Ovary (tissue), 10 donors: ENCODE measurements at regions of chr5 and their contacts with region 1.

Region 1: DNA sequence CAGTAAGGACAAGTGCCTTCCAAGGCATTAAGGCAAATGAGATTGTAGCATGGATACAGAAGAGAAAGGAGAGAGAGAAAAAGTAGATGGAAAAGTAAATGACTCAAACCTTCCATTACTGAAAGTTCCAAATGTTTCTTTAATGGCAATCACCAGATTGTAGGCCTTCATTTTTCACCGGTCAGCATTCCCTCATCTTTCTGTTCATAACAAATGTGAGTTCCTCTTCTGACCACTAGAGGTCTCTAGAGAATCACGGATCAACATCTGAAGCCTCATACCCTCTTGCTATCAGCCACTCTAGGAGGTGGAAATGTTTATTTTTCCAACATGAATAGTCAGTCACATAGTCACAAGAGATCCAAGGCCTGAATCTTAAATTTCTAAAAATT is 73.6 kb upstream of the RPS23 start:
- DNase-seq: no peak
- H3K4me3 ChIP-seq: no peak overlapping the region
- H3K27ac ChIP-seq: no peak overlapping the region
- H3K4me1 ChIP-seq: peaks cover 3% of the 10 kb centered on the region
- H3K27me3 ChIP-seq: no peaks in the 10 kb centered on the region
- CTCF ChIP-seq: peak; percentile 33 to 79 (median 75)
- EP300 ChIP-seq: no peak
- POLR2A ChIP-seq: no peak

Region 2: DNA sequence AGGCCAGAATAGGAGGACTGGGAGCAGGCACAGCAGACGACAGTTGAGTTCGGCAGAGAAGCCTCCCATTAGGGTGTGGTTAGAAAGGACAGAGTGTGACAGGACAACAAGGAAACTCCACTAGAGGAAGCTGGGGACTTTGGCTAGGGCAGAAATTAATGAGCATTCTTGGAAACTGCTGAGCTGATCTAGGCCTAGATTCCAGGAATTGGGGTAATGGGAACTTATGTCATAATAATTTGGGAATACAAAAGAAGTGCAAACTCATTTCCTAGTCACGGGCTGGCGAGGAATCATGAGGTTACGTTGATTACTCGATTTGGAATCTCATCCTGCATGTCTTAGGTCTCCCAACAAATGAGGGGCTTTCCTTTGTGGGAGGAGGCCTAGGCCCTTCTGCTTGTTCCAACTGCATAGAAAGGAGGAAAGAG is 71.0 kb after region 1 on chr5:
- intact Hi-C with region 1: no loop called
- DNase-seq: peak in 1 of 5 donors; percentile 27
- H3K4me3 ChIP-seq: no peak overlapping the region
- H3K27ac ChIP-seq: no peak overlapping the region
- H3K4me1 ChIP-seq: peaks cover 2% of the 10 kb centered on the region
- H3K27me3 ChIP-seq: no peaks in the 10 kb centered on the region
- CTCF ChIP-seq: no peak
- EP300 ChIP-seq: no peak
- POLR2A ChIP-seq: no peak

Region 3: GRCh38 chr5:83564069-83564749 is 1212.5 kb after region 1 on chr5:
- intact Hi-C with region 1: loop called in 2 of 4 experiments (anchors 10 kb)
- DNase-seq: no peak
- H3K4me3 ChIP-seq: no peak overlapping the region
- H3K27ac ChIP-seq: no peak overlapping the region
- H3K4me1 ChIP-seq: no peaks in the 10 kb centered on the region
- H3K27me3 ChIP-seq: no peaks in the 10 kb centered on the region
- CTCF ChIP-seq: peak; percentile 27 to 52 (median 29)
- EP300 ChIP-seq: no peak
- POLR2A ChIP-seq: no peak